Panc1 (cell line): ENCODE measurements at regions of chr2 and their contacts with region 1.

Region 1: DNA sequence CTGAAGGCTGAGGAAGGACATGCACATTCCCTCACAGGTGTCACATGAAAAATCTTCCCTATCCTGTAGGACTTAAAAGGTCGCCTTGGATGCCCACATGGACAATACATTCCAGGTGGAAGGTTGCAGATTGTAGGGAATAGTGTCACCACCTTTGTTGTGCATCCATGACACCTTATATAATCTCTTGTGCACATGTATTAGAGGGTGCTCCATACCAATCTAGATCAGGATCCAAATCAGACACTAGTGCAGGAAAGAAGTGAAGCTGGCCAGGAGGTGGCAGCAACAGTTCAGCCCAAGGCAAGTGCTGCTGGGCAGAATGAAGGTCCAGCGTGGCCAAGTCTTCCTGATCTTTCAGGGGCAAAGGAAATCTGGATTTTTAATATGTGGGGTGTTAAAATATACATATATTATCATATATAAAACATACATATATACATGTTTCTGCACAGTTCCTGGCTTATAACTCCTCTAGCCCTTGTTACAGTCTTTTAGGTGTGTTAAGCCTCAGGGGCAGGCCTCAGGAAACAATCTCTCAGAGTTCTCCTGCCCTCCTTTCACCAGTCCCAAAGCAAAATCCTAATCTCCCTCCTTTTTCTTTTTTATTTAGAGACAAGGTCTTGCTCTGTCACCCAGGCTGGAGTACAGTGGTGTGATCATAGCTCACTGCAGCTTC is 16.6 kb downstream of the NIF3L1 start:
- DNase-seq: peak; percentile 52
- ATAC-seq: peak; percentile 93
- H3K4me3 ChIP-seq: no peak overlapping the region
- H3K27ac ChIP-seq: no peak overlapping the region
- H3K4me1 ChIP-seq: no peaks in the 10 kb centered on the region; the same call in 1 of the 2 replicates
- H3K27me3 ChIP-seq: no peaks in the 10 kb centered on the region
- CTCF ChIP-seq: peak; percentile 88

Region 2: GRCh38 chr2:200677721-200678585 is 227.8 kb before region 1 on chr2:
- CTCF ChIA-PET with region 1: no interaction called
- POLR2A ChIA-PET with region 1: no interaction called
- in situ Hi-C with region 1: no loop called
- intact Hi-C with region 1: no loop called
- DNase-seq: no peak
- ATAC-seq: no peak
- H3K4me3 ChIP-seq: no peak overlapping the region
- H3K27ac ChIP-seq: no peak overlapping the region
- H3K4me1 ChIP-seq: no peaks in the 10 kb centered on the region
- H3K27me3 ChIP-seq: no peaks in the 10 kb centered on the region
- CTCF ChIP-seq: no peak

Region 3: GRCh38 chr2:201064797-201065329 is 159.1 kb after region 1 on chr2:
- CTCF ChIA-PET with region 1: interaction called, 18 read pairs
- POLR2A ChIA-PET with region 1: no interaction called
- in situ Hi-C with region 1: no loop called
- intact Hi-C with region 1: loop called (anchors 5 kb)
- DNase-seq: no peak
- ATAC-seq: no peak
- H3K4me3 ChIP-seq: no peak overlapping the region
- H3K27ac ChIP-seq: no peak overlapping the region
- H3K4me1 ChIP-seq: peaks cover 14% of the 10 kb centered on the region
- H3K27me3 ChIP-seq: no peaks in the 10 kb centered on the region
- CTCF ChIP-seq: no peak

Region 4: GRCh38 chr2:201071479-201072200 is 165.9 kb after region 1 on chr2 and contains the starts of genes HYCC2 and NDUFB3:
- CTCF ChIA-PET with region 1: interaction called, 18 read pairs
- POLR2A ChIA-PET with region 1: interaction called, 4 read pairs
- in situ Hi-C with region 1: no loop called
- intact Hi-C with region 1: loop called (anchors 5 kb)
- DNase-seq: peak; percentile 84
- ATAC-seq: peak; percentile 99
- H3K4me3 ChIP-seq: peak within 1 kb of the TSS; percentile 92 to 99
- H3K27ac ChIP-seq: peak within 1 kb of the TSS; percentile 94
- H3K4me1 ChIP-seq: peaks cover 22% of the 10 kb centered on the region
- H3K27me3 ChIP-seq: no peaks in the 10 kb centered on the region
- CTCF ChIP-seq: no peak
- total RNA-seq, gene HYCC2: 12.0 TPM
- total RNA-seq, gene NDUFB3: 88.6 TPM

Region 5: DNA sequence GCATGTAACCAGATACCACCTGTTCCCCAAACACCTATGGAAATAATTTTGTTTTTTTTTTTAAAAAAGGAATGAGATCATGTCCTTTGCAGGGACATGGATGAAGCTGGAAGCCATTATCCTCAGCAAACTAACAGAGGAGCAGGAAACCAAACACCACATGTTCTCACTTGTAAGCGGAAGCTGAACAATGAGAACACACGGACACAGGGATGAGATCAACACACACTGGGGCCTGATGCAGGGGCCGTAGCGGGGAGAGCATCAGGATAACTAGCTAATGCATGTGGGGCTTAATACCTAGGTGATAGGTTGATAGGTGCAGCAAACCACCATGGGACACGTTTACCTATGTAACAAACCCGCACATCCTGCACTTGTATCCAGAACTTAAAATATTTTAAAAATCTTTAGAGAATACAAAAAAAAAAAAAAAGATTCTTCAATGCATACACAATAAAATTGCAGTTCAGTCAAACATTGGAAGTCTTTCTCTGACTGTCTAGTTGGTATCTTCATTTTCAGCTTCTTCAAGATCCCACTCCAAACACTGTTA is 265.6 kb after region 1 on chr2:
- CTCF ChIA-PET with region 1: interaction called, 3 read pairs
- POLR2A ChIA-PET with region 1: no interaction called
- in situ Hi-C with region 1: no loop called
- intact Hi-C with region 1: loop called (anchors 2 kb)
- DNase-seq: no peak
- ATAC-seq: no peak
- H3K4me3 ChIP-seq: no peak overlapping the region
- H3K27ac ChIP-seq: no peak overlapping the region
- H3K4me1 ChIP-seq: no peaks in the 10 kb centered on the region
- H3K27me3 ChIP-seq: no peaks in the 10 kb centered on the region
- CTCF ChIP-seq: no peak